GM10248 (cell line): ENCODE measurements at regions of chr5 and their contacts with region 1.

Region 1: GRCh38 chr5:140710899-140711552 is 10.8 kb downstream of the ZMAT2 start:
- DNase-seq: peak; percentile 79
- CTCF ChIP-seq: no peak

Region 2: GRCh38 chr5:140227048-140227447 is 484.0 kb before region 1 on chr5:
- CTCF ChIA-PET with region 1: no interaction called
- POLR2A ChIA-PET with region 1: no interaction called
- DNase-seq: no peak
- CTCF ChIP-seq: no peak

Region 3: DNA sequence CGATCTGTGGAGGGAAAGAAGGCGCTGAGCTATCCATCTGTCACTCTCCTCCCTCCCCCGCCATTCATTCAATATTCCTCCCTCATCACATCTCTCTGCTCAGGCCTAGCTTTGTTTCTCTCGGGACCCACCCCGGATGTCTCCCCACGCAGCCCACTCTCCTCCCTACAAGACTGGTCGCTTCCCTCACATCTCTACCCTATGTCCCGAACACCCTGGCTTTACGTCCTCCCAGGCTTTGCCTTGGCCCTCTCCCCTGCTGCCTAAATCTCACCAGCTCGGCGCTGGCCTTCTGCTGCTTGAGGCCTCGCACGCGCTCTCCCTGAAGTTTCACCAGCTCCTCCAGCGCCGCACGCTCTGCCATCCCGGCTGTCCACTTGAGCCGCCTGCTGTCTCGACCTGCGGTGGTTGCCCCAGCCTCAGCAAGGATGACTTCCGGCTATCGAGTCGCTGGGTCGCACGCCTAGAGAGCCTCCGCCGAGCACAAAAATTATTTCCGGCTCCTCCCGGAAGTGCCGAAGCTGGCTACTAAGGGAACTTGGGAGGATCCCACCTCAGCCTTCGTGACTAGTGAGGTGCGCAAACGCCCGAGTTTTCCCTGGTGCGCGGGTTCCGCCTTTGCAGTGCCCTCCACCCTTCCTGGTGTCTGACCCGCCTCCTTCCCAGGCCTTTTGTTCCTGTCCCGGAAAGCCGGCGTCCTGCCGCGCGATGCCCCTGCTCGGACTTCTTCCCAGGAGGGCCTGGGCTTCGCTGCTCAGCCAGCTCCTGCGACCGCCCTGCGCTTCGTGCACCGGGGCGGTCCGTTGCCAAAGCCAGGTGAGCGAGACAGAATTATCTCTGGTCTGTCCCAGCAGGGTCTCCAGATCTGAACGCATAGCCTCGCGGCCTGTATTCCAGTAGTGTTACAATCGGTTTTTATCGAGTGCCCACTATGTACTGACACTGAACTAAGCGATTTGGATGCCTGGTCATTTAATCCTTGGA is 19.8 kb before region 1 on chr5 and contains the starts of genes HARS1 and HARS2:
- CTCF ChIA-PET with region 1: interaction called, 4 read pairs
- POLR2A ChIA-PET with region 1: interaction called, 12 read pairs
- DNase-seq: peak; percentile 93
- CTCF ChIP-seq: no peak

Region 4: GRCh38 chr5:140700177-140701144 is 10.6 kb before region 1 on chr5 and contains the start of gene ZMAT2:
- CTCF ChIA-PET with region 1: interaction called, 5 read pairs
- POLR2A ChIA-PET with region 1: interaction called, 12 read pairs
- DNase-seq: peak; percentile 95
- CTCF ChIP-seq: no peak

Region 5: GRCh38 chr5:140725799-140726471 is 14.9 kb after region 1 on chr5:
- CTCF ChIA-PET with region 1: interaction called, 12 read pairs
- POLR2A ChIA-PET with region 1: interaction called, 5 read pairs
- DNase-seq: peak; percentile 58
- CTCF ChIP-seq: no peak

Region 6: DNA sequence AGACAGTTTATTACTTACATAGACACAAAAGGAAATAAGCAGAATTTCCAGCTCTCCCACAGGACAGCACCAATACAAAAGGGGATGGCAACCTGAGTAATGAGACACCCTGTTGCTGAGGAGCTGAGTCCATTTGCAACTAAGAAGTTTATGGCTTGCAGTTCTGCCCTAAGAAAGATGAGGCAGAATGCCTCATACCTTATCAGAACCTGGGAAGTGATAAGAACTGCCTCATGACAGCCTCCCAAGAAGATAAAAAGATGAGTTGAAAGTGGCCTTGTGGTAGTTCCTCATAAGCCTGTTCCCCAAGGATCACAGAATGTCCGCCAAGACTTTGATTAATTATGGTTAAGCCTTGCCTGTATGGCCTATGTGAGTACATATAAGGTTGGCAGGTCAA is 30.9 kb after region 1 on chr5:
- CTCF ChIA-PET with region 1: no interaction called
- POLR2A ChIA-PET with region 1: no interaction called
- DNase-seq: no peak
- CTCF ChIP-seq: no peak